K562 (cell line): ENCODE measurements at regions of chr10 and their contacts with region 1.

Region 1: GRCh38 chr10:95561182-95562075 is at the start of gene SORBS1:
- DNase-seq: peak; percentile 92 to 95 (median 94)
- ATAC-seq: peak; percentile 99
- H3K4me3 ChIP-seq: peak within 1 kb of the TSS; percentile 67
- H3K27ac ChIP-seq: peak within 1 kb of the TSS; percentile 68
- H3K4me1 ChIP-seq: peaks cover 18 to 22% of the 10 kb centered on the region in 2 experiments; a peak in 4 of 5 replicates
- H3K27me3 ChIP-seq: no peaks in the 10 kb centered on the region
- CTCF ChIP-seq: no peak
- EP300 ChIP-seq: no peak
- POLR2A ChIP-seq: peak; percentile 53
- RAD21 ChIP-seq: no peak
- polyA plus RNA-seq, gene SORBS1: 2.0 to 2.8 TPM

Region 2: GRCh38 chr10:95467162-95467599 is 94.2 kb before region 1 on chr10:
- CTCF ChIA-PET with region 1: no interaction called
- POLR2A ChIA-PET with region 1: no interaction called
- in situ Hi-C with region 1: no loop called
- intact Hi-C with region 1: loop called (anchors 2 kb)
- DNase-seq: peak; percentile 45 to 83 (median 62)
- ATAC-seq: peak; percentile 100
- H3K4me3 ChIP-seq: no peak overlapping the region
- H3K27ac ChIP-seq: peak overlapping the region; percentile 50; the same call in 2 of the 3 replicates
- H3K4me1 ChIP-seq: peaks cover 0 to 3% of the 10 kb centered on the region in 2 experiments; a peak in 3 of 5 replicates
- H3K27me3 ChIP-seq: no peaks in the 10 kb centered on the region
- CTCF ChIP-seq: peak; percentile 52 to 69 (median 59)
- EP300 ChIP-seq: no peak
- POLR2A ChIP-seq: no peak
- RAD21 ChIP-seq: peak; percentile 63 to 68

Region 3: GRCh38 chr10:95493862-95494261 is 67.6 kb before region 1 on chr10:
- CTCF ChIA-PET with region 1: no interaction called
- POLR2A ChIA-PET with region 1: no interaction called
- in situ Hi-C with region 1: no loop called
- intact Hi-C with region 1: loop called (anchors 2 kb)
- DNase-seq: no peak
- ATAC-seq: no peak
- H3K4me3 ChIP-seq: no peak overlapping the region
- H3K27ac ChIP-seq: peak overlapping the region; percentile 71
- H3K4me1 ChIP-seq: peaks cover 10 to 35% of the 10 kb centered on the region in 2 experiments
- H3K27me3 ChIP-seq: no peaks in the 10 kb centered on the region
- CTCF ChIP-seq: no peak
- EP300 ChIP-seq: no peak
- POLR2A ChIP-seq: no peak
- RAD21 ChIP-seq: no peak

Region 4: GRCh38 chr10:95792874-95793285 is 231.5 kb after region 1 on chr10:
- CTCF ChIA-PET with region 1: no interaction called
- POLR2A ChIA-PET with region 1: no interaction called
- in situ Hi-C with region 1: no loop called
- intact Hi-C with region 1: no loop called
- DNase-seq: no peak
- ATAC-seq: no peak
- H3K4me3 ChIP-seq: no peak overlapping the region
- H3K27ac ChIP-seq: no peak overlapping the region
- H3K4me1 ChIP-seq: no peaks in the 10 kb centered on the region
- H3K27me3 ChIP-seq: no peaks in the 10 kb centered on the region
- CTCF ChIP-seq: no peak
- EP300 ChIP-seq: no peak
- POLR2A ChIP-seq: no peak
- RAD21 ChIP-seq: no peak